ENCODE measurements at regions of chr4 and their contacts with region 1.

Region 1: GRCh38 chr4:38489924-38490639 is 173.9 kb upstream of the KLF3 start:
- DNase-seq: peak; percentile 46
- ATAC-seq: peak; percentile 75
- H3K4me3 ChIP-seq: no peak overlapping the region
- H3K27ac ChIP-seq: no peak overlapping the region
- H3K4me1 ChIP-seq: no peaks in the 10 kb centered on the region
- H3K27me3 ChIP-seq: no peaks in the 10 kb centered on the region; the same call in 1 of the 2 replicates
- CTCF ChIP-seq: no peak
- POLR2A ChIP-seq: no peak
- RAD21 ChIP-seq: no peak

Region 2: DNA sequence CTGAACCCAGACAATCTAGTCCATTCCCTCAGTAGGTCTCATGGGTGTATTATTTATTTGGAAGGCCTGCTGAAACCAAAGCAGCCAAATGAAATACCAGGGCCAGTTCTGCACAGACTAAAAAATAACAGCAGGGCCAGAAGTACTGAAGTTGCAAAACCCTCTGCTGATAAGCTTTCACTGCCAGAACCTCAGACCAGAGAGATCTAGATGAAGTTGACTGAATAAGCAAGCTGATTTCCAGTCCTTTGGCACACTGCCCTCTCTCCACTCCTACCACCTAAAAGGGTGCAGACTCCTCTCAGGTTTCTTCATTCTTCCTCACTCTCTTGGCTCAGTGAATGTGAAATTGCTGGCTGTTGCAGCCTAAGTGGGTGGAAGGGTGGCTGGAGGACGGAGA is 102.7 kb before region 1 on chr4:
- CTCF ChIA-PET with region 1: no interaction called
- POLR2A ChIA-PET with region 1: no interaction called
- dilution Hi-C with region 1: no loop called
- in situ Hi-C with region 1: loop called (anchors 25 kb)
- intact Hi-C with region 1: no loop called
- DNase-seq: peak; percentile 6
- ATAC-seq: peak; percentile 40; the same call in 1 of the 2 replicates
- H3K4me3 ChIP-seq: no peak overlapping the region
- H3K27ac ChIP-seq: no peak overlapping the region
- H3K4me1 ChIP-seq: no peaks in the 10 kb centered on the region
- H3K27me3 ChIP-seq: peaks cover 1% of the 10 kb centered on the region
- CTCF ChIP-seq: no peak
- POLR2A ChIP-seq: no peak
- RAD21 ChIP-seq: no peak